Activated CD8-positive, alpha-beta memory T cell treated with anti-CD3 and anti-CD28 coated beads, Interleukin-2, amount 10 ng/mL, durations not matched to agents 7 days and 5 days (primary cell): ENCODE measurements at regions of chr20 and their contacts with region 1.

Region 1: DNA sequence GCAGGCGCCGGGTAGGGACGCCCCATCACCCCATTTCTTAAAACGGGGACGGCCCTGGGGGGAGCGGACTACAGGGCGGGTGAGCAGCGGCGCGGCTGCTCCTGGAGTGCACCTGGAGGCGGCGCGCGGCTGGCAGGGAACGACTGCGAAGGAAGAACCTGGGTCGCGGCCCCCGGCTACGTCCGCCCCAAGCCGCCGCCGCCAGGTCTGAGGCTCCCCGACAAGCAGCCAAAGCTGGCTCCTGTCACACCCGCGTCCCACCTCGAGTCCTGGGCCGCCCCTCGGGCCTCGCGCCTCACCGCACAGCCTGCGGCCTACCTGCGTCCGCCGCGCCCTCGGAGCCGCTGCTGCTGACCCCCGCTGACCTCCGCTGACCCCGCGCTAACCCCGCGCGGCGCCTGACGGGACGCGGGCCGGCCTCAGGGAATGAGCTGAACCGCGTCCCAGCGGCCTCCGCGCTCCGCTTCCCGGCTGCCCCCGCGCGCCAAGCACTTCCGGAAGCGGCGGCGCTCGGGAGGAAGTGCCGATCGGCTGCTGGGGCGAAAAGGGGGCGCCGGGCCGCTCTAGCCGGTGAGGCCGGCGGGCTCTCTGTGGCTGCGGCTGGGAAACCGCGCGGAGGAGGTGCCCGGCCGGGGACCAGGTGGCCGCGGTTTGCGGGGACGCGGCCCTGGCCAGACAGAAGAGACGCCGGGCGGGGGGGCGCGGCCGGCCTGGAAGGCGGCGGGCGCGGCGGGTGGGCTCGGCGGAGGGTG is at the starts of genes ARFRP1 and ZGPAT:
- DNase-seq: peak; percentile 91
- ATAC-seq: peak; percentile 82
- H3K4me3 Mint-ChIP-seq: peak within 1 kb of the TSS; percentile 83
- H3K27ac Mint-ChIP-seq: peak within 1 kb of the TSS; percentile 77
- H3K4me1 Mint-ChIP-seq: peaks cover 56% of the 10 kb centered on the region
- H3K27me3 Mint-ChIP-seq: no peaks in the 10 kb centered on the region
- total RNA-seq, gene ARFRP1: 62.6 to 62.7 TPM
- total RNA-seq, gene ZGPAT: 38.8 to 54.6 TPM

Region 2: DNA sequence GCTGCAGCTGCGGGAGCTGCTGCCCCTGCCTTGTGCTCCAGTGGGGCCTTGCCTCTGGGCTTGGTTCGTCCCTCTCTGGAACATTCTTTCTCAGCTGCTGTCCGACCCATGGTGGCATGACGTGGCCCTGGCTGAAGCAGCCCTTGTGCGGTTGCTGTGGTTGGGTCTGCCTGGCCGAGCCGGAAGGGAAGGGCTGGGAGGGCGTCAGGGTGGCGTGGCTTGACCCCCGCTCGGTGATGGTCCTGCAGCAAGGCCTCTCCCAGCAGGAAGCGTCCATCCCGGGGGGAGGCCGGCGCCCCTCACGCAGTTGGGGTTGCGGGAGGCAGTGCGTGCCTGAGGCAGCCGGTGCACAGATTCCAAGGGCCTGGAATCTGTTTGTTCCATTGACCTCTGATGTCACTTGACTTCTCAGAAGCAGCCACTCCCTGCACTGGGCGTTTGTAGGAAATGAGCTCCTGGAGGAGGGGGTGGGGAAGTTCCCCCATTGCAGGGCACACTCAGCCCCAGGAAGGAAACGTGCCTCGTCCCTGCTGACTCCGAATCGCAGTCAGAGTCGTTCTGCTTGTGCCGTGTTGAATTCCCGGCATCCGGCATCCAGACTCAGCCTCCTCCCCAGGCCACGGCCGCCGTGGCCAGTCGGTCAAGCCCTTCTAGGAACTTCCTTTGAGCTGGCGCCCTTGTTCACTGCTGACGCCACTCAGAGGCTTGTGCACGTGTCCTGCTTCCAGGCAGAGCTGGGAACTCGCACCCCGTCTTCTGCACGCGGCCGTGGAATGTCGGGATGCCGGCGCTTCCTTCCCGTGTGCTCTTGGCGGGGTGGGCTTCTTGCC is 21.0 kb before region 1 on chr20:
- CTCF ChIA-PET with region 1: no interaction called
- DNase-seq: no peak
- ATAC-seq: no peak
- H3K4me3 Mint-ChIP-seq: no peak overlapping the region
- H3K27ac Mint-ChIP-seq: no peak overlapping the region
- H3K4me1 Mint-ChIP-seq: peaks cover 7% of the 10 kb centered on the region
- H3K27me3 Mint-ChIP-seq: no peaks in the 10 kb centered on the region

Region 3: DNA sequence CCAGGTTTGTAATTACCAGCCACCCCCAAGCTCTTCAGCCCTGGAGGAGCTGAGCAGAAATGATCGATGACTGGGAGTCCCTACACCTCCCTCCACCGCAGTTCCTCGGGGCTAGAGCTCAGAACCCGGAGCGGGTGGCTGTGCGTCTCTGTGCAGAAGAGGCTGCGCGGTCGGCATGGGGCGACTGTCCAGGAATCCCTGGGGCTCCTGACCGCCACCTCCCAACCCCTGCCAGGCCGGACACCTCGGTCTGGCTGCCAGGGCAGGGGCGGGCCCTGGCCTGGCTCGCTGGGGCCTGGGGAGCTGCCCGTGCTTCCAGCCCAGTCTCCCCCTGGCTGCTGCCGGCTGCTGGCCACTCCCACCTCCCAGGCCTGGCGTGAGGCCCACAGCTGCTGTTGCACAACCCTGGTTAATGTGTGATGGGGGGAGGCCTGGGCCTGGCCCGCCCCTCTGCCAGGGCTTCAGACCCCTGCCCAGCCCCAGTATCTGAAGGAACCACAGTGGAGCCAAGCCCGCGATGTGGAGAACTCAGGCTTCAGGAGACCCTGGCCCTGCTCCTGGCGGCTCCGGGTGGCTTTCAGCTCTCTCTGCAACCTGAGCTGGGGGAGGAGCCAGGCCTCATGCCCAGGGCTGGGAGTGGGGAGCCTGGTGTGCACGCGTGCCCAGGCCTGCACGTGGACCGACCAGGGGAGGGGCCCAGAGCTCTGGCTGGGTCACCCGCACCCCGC is 33.1 kb after region 1 on chr20:
- CTCF ChIA-PET with region 1: interaction called, 27 read pairs
- DNase-seq: peak; percentile 71
- ATAC-seq: peak; percentile 10
- H3K4me3 Mint-ChIP-seq: peak overlapping the region; percentile 61
- H3K27ac Mint-ChIP-seq: no peak overlapping the region
- H3K4me1 Mint-ChIP-seq: peaks cover 16% of the 10 kb centered on the region
- H3K27me3 Mint-ChIP-seq: no peaks in the 10 kb centered on the region

Region 4: GRCh38 chr20:63750807-63751470 is 43.2 kb after region 1 on chr20:
- CTCF ChIA-PET with region 1: interaction called, 10 read pairs
- DNase-seq: peak; percentile 81
- ATAC-seq: peak; percentile 83
- H3K4me3 Mint-ChIP-seq: peak overlapping the region; percentile 62
- H3K27ac Mint-ChIP-seq: peak overlapping the region; percentile 93
- H3K4me1 Mint-ChIP-seq: peaks cover 18% of the 10 kb centered on the region
- H3K27me3 Mint-ChIP-seq: no peaks in the 10 kb centered on the region

Region 5: GRCh38 chr20:63782051-63782471 is 74.3 kb after region 1 on chr20:
- CTCF ChIA-PET with region 1: interaction called, 22 read pairs
- DNase-seq: peak; percentile 80
- ATAC-seq: peak; percentile 89
- H3K4me3 Mint-ChIP-seq: no peak overlapping the region
- H3K27ac Mint-ChIP-seq: no peak overlapping the region
- H3K4me1 Mint-ChIP-seq: peaks cover 18% of the 10 kb centered on the region
- H3K27me3 Mint-ChIP-seq: no peaks in the 10 kb centered on the region

Region 6: DNA sequence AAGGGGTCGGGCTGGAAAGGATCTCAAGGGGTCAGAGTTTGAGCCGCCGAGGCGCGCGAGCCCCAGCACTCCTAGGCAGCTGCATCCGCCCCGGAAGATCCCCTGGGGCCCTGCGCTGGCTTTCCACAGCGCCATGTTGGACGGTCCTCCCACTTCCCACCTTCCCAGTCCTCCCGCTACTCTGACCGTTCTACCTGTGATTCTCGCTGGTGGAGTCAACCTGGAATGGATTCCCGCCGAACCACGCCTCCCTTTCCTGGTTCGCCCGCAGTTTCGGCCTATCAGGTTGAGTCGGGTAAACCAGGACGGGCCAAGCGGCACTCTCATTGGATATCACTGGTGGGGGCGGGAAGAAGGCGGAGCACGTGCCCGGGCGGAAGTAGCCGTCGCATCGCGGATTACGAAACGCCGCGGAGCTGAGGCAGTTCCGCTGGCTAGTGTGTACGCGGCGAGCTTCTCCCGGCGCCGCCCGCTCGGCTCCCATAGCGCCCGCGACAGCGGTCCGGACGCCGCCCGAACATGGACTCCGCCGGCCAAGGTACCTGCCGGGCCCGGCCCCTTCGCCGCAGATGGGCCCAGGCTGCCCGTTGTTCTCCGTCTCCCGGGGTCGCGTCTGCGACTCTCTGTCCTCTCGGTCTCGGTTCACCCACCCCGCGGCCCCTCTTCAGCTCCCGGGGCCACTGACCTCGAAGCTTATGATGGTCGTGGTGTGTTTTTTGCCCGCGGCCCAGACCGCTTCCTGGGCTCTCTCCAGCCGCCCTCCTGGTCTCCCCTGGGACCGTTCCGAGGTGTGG is 157.3 kb after region 1 on chr20 and contains the start of gene TPD52L2:
- CTCF ChIA-PET with region 1: interaction called, 31 read pairs
- DNase-seq: peak; percentile 99
- ATAC-seq: peak; percentile 91
- H3K4me3 Mint-ChIP-seq: peak within 1 kb of the TSS; percentile 82
- H3K27ac Mint-ChIP-seq: peak within 1 kb of the TSS; percentile 84
- H3K4me1 Mint-ChIP-seq: peaks cover 24% of the 10 kb centered on the region
- H3K27me3 Mint-ChIP-seq: no peaks in the 10 kb centered on the region
- total RNA-seq, gene TPD52L2: 33.5 to 46.2 TPM